T-cell (primary cell): ENCODE measurements at regions of chr1 and their contacts with region 1.

Region 1: GRCh38 chr1:204533606-204534005 is 17.4 kb downstream of the MDM4 start:
- DNase-seq: no peak
- ATAC-seq: no peak
- H3K4me3 ChIP-seq: no peak overlapping the region
- H3K4me3 Mint-ChIP-seq: no peak overlapping the region
- H3K27ac ChIP-seq: no peak overlapping the region
- H3K27ac Mint-ChIP-seq: no peak overlapping the region
- H3K4me1 ChIP-seq: peaks cover 0 to 3% of the 10 kb centered on the region in 2 experiments
- H3K4me1 Mint-ChIP-seq: peaks cover 21 to 35% (median 29%) of the 10 kb centered on the region in 3 donors
- H3K27me3 ChIP-seq: no peaks in the 10 kb centered on the region
- H3K27me3 Mint-ChIP-seq: no peaks in the 10 kb centered on the region

Region 2: DNA sequence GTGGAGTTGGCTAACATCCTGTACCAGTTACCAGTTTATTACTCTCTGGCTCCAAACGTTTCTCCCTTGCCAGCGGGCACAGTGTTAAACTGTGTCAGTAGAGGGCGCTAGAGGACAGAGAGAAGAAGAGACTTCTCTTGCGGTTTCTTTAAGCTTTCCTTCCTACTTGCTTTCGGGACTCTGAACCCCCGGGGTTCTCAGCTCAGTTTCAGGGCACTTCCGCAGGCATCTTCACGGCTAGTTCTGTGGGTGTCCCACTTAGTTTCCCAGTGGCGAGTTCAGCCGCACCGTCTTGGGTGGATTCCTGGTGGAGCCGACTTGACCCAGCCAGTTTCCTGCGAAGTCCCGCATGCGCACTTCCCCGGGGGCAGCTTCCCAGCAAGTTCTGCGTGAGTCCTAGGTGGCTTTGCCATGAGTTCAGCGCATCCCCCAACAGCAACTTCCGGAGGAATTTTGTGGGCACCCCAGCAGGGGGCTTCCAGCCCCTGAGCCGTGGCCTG is 1266.2 kb before region 1 on chr1:
- CTCF ChIA-PET with region 1: no interaction called
- POLR2A ChIA-PET with region 1: no interaction called
- DNase-seq: peak; percentile 53 to 94 (median 76)
- ATAC-seq: peak; percentile 55 to 69 (median 66)
- H3K4me3 ChIP-seq: peak overlapping the region; percentile 28 to 58
- H3K4me3 Mint-ChIP-seq: peak overlapping the region; percentile 85 to 86 (median 85)
- H3K27ac ChIP-seq: peak overlapping the region; percentile 60
- H3K27ac Mint-ChIP-seq: peak overlapping the region; percentile 90 to 93
- H3K4me1 ChIP-seq: peaks cover 14 to 37% of the 10 kb centered on the region in 2 experiments
- H3K4me1 Mint-ChIP-seq: peaks cover 20 to 24% (median 22%) of the 10 kb centered on the region in 3 donors
- H3K27me3 ChIP-seq: peaks cover 0 to 5% of the 10 kb centered on the region in 2 experiments
- H3K27me3 Mint-ChIP-seq: no peaks in the 10 kb centered on the region

Region 3: GRCh38 chr1:204232526-204232925 is 301.1 kb before region 1 on chr1:
- CTCF ChIA-PET with region 1: no interaction called
- POLR2A ChIA-PET with region 1: no interaction called
- DNase-seq: no peak
- ATAC-seq: no peak
- H3K4me3 ChIP-seq: no peak overlapping the region
- H3K4me3 Mint-ChIP-seq: no peak overlapping the region
- H3K27ac ChIP-seq: no peak overlapping the region
- H3K27ac Mint-ChIP-seq: no peak overlapping the region
- H3K4me1 ChIP-seq: no peaks in the 10 kb centered on the region
- H3K4me1 Mint-ChIP-seq: no peaks in the 10 kb centered on the region
- H3K27me3 ChIP-seq: peaks cover 0 to 2% of the 10 kb centered on the region in 2 experiments
- H3K27me3 Mint-ChIP-seq: peaks cover 2 to 7% of the 10 kb centered on the region in 2 donors

Region 4: DNA sequence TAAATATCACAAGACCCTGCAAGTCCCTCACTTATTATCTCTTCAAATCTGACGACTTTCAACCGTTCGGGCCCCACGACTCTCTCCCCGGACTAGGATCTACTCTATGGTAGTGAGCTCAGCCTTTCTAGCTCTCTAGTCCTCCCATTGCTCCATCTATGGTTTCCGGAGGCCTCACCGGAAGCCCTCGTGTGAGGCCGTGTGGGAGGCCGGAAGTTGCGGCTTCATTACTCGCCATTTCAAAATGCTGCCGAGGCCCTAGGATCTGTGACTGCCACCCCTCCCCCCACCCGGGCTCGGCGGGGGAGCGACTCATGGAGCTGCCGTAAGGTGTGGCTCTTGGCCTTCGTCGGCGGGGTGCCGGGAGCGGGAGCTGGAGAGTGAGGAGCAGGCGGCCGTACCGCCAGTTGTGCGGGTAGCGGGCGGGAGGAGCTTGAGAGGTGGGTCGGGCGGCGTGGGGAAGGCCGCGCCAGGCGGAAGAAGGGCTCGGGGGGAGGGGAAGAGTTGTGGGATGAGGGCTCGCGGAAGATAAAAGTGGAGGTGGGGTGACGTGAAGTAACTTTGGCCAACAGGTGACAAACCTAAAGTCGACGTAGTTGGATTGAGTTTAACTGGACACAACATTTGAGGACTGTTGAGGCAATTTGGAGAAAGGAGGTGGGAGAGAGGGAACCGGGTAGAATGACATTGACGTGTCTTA is 17.3 kb before region 1 on chr1 and contains the start of gene MDM4:
- CTCF ChIA-PET with region 1: interaction called in 1 of 2 experiments, 3 read pairs
- POLR2A ChIA-PET with region 1: interaction called, 3 to 11 read pairs
- DNase-seq: peak; percentile 87 to 95 (median 90)
- ATAC-seq: peak; percentile 76 to 89 (median 87)
- H3K4me3 ChIP-seq: peak within 1 kb of the TSS; percentile 83 to 97
- H3K4me3 Mint-ChIP-seq: no peak within 1 kb of the TSS
- H3K27ac ChIP-seq: peak within 1 kb of the TSS; percentile 93
- H3K27ac Mint-ChIP-seq: no peak within 1 kb of the TSS
- H3K4me1 ChIP-seq: peaks cover 58 to 70% of the 10 kb centered on the region in 2 experiments
- H3K4me1 Mint-ChIP-seq: peaks cover 67 to 78% (median 69%) of the 10 kb centered on the region in 3 donors
- H3K27me3 ChIP-seq: no peaks in the 10 kb centered on the region
- H3K27me3 Mint-ChIP-seq: no peaks in the 10 kb centered on the region
- total RNA-seq, gene MDM4: 168 to 288 (median 183) TPM